ENCODE measurements at regions of chr5 and their contacts with region 1.

Region 1: DNA sequence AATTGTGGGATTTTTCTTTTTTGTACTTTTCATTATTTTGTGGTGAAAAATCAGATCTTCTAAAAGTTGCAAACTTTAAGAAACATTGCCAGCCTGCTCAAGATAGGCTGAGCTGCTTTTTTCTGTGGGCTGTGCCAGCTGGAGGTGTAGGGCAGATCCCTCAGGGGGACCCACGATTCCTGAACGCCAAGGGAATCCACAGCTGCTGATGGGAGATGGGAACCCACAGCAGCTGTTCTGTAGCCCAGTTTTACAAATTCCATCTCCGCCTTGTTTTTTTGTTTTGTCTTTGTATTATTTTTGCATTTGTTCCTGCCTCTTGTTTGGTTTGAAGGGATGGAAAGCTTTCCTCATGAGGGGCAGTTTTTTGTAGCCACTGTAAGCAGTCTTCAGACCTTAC is 91.0 kb downstream of the WWC1 start:
- DNase-seq: no peak
- ATAC-seq: no peak
- H3K4me3 ChIP-seq: no peak overlapping the region
- H3K4me3 Mint-ChIP-seq: peak overlapping the region in 3 of 10 donors; percentile 19 to 57 (median 34)
- H3K27ac ChIP-seq: no peak overlapping the region
- H3K27ac Mint-ChIP-seq: peak overlapping the region in 3 of 9 donors; percentile 16 to 59 (median 26)
- H3K4me1 ChIP-seq: no peaks in the 10 kb centered on the region
- H3K4me1 Mint-ChIP-seq: peaks cover 0 to 19% (median 13%) of the 10 kb centered on the region in 7 donors
- H3K27me3 ChIP-seq: no peaks in the 10 kb centered on the region
- H3K27me3 Mint-ChIP-seq: no peaks in the 10 kb centered on the region

Region 2: DNA sequence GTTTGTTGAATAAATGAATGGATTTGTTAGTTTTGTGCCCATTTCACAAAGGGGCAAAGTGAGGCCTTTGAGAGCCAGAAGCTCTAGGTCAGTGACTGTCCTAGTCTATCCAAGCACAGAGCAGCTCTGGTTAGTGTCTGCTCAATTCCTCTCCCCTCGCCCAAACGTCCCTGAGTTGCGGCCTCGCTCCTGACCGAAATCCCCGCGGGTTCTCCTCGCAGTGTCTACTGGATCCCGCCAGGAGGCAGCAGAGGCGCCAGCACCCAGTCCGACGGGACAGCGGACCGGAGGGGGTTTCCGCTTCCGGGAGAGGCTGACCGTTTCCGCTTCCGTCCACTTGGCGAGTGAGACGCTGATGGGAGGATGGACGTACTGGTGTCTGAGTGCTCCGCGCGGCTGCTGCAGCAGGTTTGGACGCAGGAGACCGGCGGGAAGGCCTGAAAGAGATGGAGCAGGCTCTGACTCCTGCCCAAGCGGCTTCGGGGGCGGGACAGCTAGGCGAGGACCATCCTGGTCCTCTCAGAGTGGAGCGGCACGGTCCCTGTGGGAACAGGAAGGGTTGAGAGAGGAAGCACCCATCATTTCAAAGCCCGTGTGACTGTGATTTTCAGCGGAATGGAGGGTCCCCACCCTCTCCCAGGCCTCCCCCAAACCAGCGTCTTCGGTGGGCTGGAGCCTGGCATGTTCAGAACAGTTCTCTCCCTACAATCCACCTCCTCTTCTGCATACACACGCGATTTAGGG is 103.9 kb after region 1 on chr5 and contains the start of gene RARS1:
- CTCF ChIA-PET with region 1: no interaction called
- POLR2A ChIA-PET with region 1: no interaction called
- intact Hi-C with region 1: loop called in 1 of 2 experiments (anchors 10 kb)
- DNase-seq: peak; percentile 65 to 89 (median 76)
- ATAC-seq: peak; percentile 98
- H3K4me3 ChIP-seq: peak within 1 kb of the TSS; percentile 93
- H3K4me3 Mint-ChIP-seq: peak within 1 kb of the TSS; percentile 96 to 100 (median 99)
- H3K27ac ChIP-seq: peak within 1 kb of the TSS; percentile 73
- H3K27ac Mint-ChIP-seq: peak within 1 kb of the TSS; percentile 88 to 96 (median 92)
- H3K4me1 ChIP-seq: peaks cover 7% of the 10 kb centered on the region in 2 donors
- H3K4me1 Mint-ChIP-seq: peaks cover 30 to 52% (median 44%) of the 10 kb centered on the region in 7 donors
- H3K27me3 ChIP-seq: no peaks in the 10 kb centered on the region
- H3K27me3 Mint-ChIP-seq: peaks cover 0 to 3% (median 0%) of the 10 kb centered on the region in 5 donors
- total RNA-seq, gene RARS1: 59.1 to 110 (median 81.3) TPM